Esophagus muscularis mucosa (tissue), 4 donors: ENCODE measurements at regions of chr10 and their contacts with region 1.

Region 1: DNA sequence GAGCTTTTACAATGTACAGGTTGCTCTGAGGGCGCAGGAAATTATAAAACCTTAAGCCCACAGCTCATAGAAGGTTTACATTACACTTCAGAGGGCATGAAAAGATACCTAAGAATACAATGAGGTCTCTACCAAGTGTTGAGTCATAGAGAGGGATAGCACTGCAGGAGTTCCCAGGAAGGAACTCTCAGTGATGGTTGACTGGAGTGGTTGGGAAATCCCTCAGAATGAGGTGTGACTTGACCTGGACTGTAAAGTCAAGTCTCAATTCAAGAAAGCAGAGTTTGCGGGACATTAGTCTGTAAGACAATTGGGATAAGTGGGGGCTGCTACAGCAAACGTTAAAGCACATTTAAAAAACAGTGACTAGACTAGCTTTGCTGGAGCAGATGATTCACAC is 21.9 kb downstream of the TNKS2 start:
- DNase-seq: no peak
- H3K4me3 ChIP-seq: no peak overlapping the region
- H3K27ac ChIP-seq: no peak overlapping the region
- H3K4me1 ChIP-seq: peaks cover 0 to 7% (median 2%) of the 10 kb centered on the region in 4 donors
- H3K27me3 ChIP-seq: no peaks in the 10 kb centered on the region
- CTCF ChIP-seq: no peak
- EP300 ChIP-seq: no peak
- POLR2A ChIP-seq: no peak

Region 2: DNA sequence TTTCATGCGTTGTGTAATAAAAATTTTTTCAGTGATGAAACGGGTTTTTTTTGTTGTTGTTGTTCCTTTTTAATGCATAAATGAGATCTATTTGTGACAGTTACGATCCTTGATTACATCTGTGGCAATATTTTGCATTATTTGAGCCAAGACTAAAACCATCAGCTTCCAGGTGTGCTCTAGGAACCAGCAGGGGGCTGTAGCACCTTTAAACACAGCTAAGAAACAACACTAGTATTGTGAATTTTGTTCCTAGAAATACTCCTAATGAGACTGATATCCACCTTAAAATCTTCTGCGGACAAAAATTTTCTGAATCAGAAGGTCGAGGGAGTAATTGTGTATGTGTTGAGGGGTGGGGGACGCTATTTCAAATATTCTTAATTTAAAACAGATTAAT is 36.5 kb after region 1 on chr10:
- intact Hi-C with region 1: loop called (anchors 5 kb)
- DNase-seq: no peak
- H3K4me3 ChIP-seq: no peak overlapping the region
- H3K27ac ChIP-seq: no peak overlapping the region
- H3K4me1 ChIP-seq: no peaks in the 10 kb centered on the region
- H3K27me3 ChIP-seq: no peaks in the 10 kb centered on the region
- CTCF ChIP-seq: no peak
- EP300 ChIP-seq: no peak
- POLR2A ChIP-seq: no peak